ENCODE measurements at regions of chr7 and their contacts with region 1.

Region 1: GRCh38 chr7:82410461-82410860 is 33.1 kb downstream of the CACNA2D1 start:
- DNase-seq: peak; percentile 52 to 83
- ATAC-seq: peak; percentile 94 to 97 (median 96)
- H3K4me3 ChIP-seq: peak overlapping the region; percentile 56
- H3K27ac ChIP-seq: peak overlapping the region; percentile 89
- H3K4me1 ChIP-seq: peaks cover 32% of the 10 kb centered on the region
- H3K27me3 ChIP-seq: no peaks in the 10 kb centered on the region
- CTCF ChIP-seq: no peak

Region 2: DNA sequence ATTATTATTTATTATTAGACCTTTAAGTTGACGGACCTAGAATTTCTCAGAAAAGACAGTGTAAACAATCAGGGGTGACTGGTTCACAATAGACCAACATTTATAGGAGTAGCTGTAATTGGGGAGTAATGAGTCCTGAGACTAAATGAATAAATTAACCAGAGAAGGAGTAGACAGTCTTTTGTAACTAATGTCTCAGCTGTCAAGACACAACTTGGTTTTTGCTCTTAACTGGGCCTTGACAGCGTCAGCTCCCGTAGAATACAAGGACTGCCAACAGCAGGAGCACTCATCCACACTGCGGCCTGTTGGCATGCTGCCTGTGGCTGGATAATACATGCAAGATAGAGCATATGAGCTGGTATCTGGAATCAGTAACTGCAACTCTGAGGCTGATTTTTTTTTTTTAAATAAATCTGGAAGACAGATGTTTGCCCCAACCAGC is 90.8 kb before region 1 on chr7:
- intact Hi-C with region 1: loop called in 1 of 2 experiments (anchors 10 kb)
- DNase-seq: peak; percentile 85 to 94
- ATAC-seq: peak; percentile 83 to 88 (median 86)
- H3K4me3 ChIP-seq: peak overlapping the region; percentile 40
- H3K27ac ChIP-seq: peak overlapping the region; percentile 85
- H3K4me1 ChIP-seq: peaks cover 50% of the 10 kb centered on the region
- H3K27me3 ChIP-seq: no peaks in the 10 kb centered on the region
- CTCF ChIP-seq: no peak

Region 3: GRCh38 chr7:82362129-82362706 is 48.2 kb before region 1 on chr7:
- intact Hi-C with region 1: no loop called
- DNase-seq: no peak
- ATAC-seq: no peak
- H3K4me3 ChIP-seq: no peak overlapping the region
- H3K27ac ChIP-seq: peak overlapping the region; percentile 4
- H3K4me1 ChIP-seq: peaks cover 64% of the 10 kb centered on the region
- H3K27me3 ChIP-seq: no peaks in the 10 kb centered on the region
- CTCF ChIP-seq: no peak

Region 4: DNA sequence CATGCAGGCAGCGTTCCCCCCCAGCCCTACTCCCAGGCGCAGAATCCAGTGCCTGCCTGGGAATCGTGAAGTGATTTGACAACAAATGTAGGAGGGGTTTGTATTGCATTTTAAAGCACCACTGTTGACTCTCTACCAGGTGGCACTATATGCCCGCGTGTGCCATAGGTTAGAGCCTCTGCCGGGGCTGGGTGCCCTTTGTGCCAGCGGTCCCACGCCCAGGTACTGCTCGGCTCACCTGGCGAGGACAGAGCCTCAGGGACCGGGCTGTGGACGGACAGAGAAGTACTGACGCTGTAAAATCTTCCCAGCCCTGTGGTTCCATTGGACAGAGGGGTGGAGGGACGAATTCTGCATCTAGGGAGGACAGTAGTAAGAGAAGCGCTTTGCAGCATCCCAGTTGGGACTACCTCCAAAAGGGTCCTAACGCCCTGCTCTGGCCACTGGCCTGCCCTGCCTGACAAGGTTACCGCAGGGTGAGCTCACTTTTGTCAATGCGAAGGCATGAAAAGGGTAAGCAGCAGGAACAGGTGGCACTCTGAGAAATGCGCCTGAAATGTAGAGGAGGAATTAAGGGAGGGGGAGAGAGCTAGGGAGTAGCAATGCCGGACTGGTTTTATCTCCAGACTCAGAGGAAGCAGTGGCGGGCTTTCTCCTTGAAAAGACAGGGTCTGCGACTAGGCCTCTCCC is 33.9 kb after region 1 on chr7:
- intact Hi-C with region 1: no loop called
- DNase-seq: no peak
- ATAC-seq: no peak
- H3K4me3 ChIP-seq: peak overlapping the region; percentile 79
- H3K27ac ChIP-seq: peak overlapping the region; percentile 99
- H3K4me1 ChIP-seq: peaks cover 24% of the 10 kb centered on the region
- H3K27me3 ChIP-seq: no peaks in the 10 kb centered on the region
- CTCF ChIP-seq: no peak

Region 5: GRCh38 chr7:82455295-82455694 is 44.8 kb after region 1 on chr7:
- intact Hi-C with region 1: no loop called
- DNase-seq: no peak
- ATAC-seq: peak; percentile 64 to 88 (median 81)
- H3K4me3 ChIP-seq: peak overlapping the region; percentile 41
- H3K27ac ChIP-seq: peak overlapping the region; percentile 73
- H3K4me1 ChIP-seq: peaks cover 20% of the 10 kb centered on the region
- H3K27me3 ChIP-seq: no peaks in the 10 kb centered on the region
- CTCF ChIP-seq: no peak